ENCODE measurements at regions of chr11 and their contacts with region 1.

Region 1: GRCh38 chr11:112289588-112290492 is 29.2 kb upstream of the PLET1 start:
- DNase-seq: peak; percentile 89
- H3K4me3 ChIP-seq: peak overlapping the region; percentile 43 to 82 (median 64)
- H3K27ac ChIP-seq: peak overlapping the region; percentile 80 to 91 (median 84)
- H3K4me1 ChIP-seq: peaks cover 0 to 33% (median 29%) of the 10 kb centered on the region in 4 donors
- H3K27me3 ChIP-seq: no peaks in the 10 kb centered on the region
- CTCF ChIP-seq: peak; percentile 30 to 89 (median 74)
- EP300 ChIP-seq: no peak
- POLR2A ChIP-seq: peak in 1 of 2 donors; percentile 15

Region 2: DNA sequence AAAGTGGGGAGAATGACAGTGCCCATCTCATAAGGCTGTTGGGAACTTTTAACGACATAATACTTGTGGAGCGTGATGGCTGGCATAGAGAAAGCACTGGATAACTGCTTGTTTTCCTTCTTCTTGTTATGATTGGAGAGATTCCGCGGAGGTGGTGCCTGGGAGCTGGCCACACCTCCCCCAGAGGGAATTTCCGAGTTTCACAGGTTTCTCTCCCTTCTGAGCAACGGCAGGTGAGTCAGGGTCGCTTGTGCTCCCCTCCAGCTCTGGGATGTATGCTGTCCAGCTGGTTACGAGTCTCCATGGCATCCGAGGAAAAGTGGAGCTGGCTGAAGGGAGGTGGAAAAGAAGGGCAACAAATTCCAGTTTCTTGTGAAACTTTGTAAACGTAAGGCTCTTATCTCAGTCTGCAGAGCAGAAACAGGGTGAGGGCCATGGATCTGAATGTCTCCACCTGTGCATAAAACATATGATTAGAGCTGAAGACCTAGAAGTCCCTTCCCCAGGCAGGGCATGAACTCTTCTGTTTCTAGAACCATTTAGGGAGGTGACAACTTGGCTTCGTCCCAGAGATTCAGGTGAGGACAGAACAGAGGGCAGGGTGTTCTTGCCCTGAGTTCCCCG is 19.2 kb before region 1 on chr11:
- intact Hi-C with region 1: no loop called
- DNase-seq: no peak
- H3K4me3 ChIP-seq: no peak overlapping the region
- H3K27ac ChIP-seq: no peak overlapping the region
- H3K4me1 ChIP-seq: peaks cover 0 to 20% (median 13%) of the 10 kb centered on the region in 4 donors
- H3K27me3 ChIP-seq: no peaks in the 10 kb centered on the region
- CTCF ChIP-seq: no peak
- EP300 ChIP-seq: no peak
- POLR2A ChIP-seq: no peak

Region 3: GRCh38 chr11:112364962-112365481 is 75.2 kb after region 1 on chr11:
- intact Hi-C with region 1: loop called (anchors 5 kb)
- DNase-seq: peak; percentile 85
- H3K4me3 ChIP-seq: no peak overlapping the region
- H3K27ac ChIP-seq: peak overlapping the region; percentile 74 to 86 (median 78)
- H3K4me1 ChIP-seq: peaks cover 3 to 31% (median 29%) of the 10 kb centered on the region in 4 donors
- H3K27me3 ChIP-seq: no peaks in the 10 kb centered on the region
- CTCF ChIP-seq: no peak
- EP300 ChIP-seq: peak in 2 of 4 donors; percentile 64 to 65
- POLR2A ChIP-seq: no peak

Region 4: DNA sequence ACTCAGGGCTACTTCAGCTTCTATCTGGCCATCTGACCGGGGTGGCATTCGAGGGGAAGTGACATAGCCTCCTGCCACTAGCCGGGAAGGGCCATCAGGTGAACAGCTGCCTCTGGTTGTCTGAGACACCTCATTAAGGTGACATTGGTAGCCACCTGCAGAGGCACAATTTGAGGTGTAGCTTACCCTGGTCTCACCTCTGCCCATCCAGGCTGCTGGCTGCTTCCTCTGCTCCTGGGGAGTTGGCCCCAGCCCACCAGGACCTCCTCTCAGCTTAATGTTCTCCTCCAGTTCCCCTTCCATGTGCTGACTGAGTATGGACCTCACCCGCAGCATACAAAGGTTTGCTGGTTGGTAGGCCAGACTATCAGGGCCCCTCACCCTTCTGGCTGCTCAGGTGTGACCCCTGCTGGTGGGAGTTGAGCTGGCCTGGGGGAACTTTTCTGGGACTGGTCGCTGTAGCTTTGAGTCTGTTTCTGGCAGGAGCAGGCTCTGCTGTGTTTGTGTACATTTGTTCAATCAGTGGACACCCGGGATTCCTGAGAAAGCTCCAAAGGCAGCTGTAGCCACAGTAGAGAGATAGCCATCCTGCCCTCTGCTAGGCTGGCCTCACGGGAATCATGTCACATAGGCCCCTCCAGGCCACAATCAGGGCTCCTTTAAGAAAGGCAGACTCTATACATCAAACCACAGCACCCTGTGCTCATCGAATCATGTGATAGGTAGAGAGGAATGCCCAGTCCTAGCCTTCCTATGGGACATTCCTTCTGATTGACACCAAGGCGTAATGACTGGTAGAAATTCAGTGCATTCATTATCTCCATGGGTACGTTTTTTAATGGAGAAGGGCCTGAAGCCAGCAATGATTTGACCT is 265.9 kb after region 1 on chr11:
- intact Hi-C with region 1: loop called (anchors 5 kb)
- DNase-seq: peak; percentile 71
- H3K4me3 ChIP-seq: no peak overlapping the region
- H3K27ac ChIP-seq: no peak overlapping the region
- H3K4me1 ChIP-seq: no peaks in the 10 kb centered on the region
- H3K27me3 ChIP-seq: no peaks in the 10 kb centered on the region
- CTCF ChIP-seq: peak in 3 of 4 experiments; percentile 27 to 46 (median 41)
- EP300 ChIP-seq: no peak
- POLR2A ChIP-seq: no peak

Region 5: GRCh38 chr11:112806876-112807275 is 517.0 kb after region 1 on chr11:
- intact Hi-C with region 1: loop called (anchors 10 kb)
- DNase-seq: no peak
- H3K4me3 ChIP-seq: no peak overlapping the region
- H3K27ac ChIP-seq: no peak overlapping the region
- H3K4me1 ChIP-seq: peaks cover 0 to 49% (median 28%) of the 10 kb centered on the region in 4 donors
- H3K27me3 ChIP-seq: no peaks in the 10 kb centered on the region
- CTCF ChIP-seq: no peak
- EP300 ChIP-seq: no peak
- POLR2A ChIP-seq: no peak

Region 6: DNA sequence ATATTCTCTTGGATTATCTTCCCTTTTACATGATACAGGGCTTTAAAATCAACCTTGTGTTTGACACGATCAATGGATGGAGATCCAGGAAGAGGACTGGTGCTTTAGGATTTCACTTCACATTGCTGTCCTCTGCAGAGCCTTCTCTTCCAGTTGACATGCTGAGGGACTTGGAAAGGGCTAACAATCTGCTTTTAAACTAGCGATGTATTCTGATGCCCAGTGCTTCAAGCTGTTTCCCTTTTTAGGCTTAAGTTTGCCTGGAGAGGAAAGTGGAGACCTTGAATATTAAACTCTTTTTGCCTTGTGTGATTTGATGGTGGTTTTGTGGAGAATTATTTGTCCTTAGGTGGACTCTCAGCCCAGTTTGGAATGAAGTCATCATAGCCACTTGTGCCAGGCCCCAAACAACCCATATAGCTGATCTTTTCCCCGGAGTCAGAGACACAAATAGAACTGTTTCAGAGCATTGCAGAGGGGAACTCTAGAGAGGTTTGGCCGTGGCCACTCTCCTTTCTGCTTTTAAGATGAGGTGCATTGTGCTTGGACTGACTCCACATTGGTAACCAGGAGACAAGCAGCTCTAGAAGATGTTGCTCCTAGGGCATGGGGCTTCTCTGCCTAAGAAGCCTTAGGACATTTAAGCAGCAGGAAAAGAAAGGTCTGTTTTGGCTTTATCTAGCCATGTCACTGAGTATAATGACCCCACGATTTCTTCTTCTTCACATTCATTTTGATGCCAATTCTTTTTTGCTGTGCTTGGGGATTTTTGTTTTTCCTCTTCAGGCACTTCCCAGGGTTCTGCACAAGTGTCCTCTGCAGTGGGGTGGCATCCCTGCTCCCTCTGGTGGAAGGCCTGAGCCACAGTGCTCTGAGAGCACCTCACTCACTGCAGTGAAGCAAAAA is 824.2 kb after region 1 on chr11:
- intact Hi-C with region 1: loop called (anchors 5 kb)
- DNase-seq: peak; percentile 71
- H3K4me3 ChIP-seq: no peak overlapping the region
- H3K27ac ChIP-seq: peak overlapping the region in 3 of 4 donors; percentile 19 to 47 (median 43)
- H3K4me1 ChIP-seq: peaks cover 0 to 26% (median 21%) of the 10 kb centered on the region in 4 donors
- H3K27me3 ChIP-seq: no peaks in the 10 kb centered on the region
- CTCF ChIP-seq: peak; percentile 24 to 77 (median 70)
- EP300 ChIP-seq: no peak
- POLR2A ChIP-seq: no peak